Right ventricle myocardium inferior (tissue), 1 donor: ENCODE measurements at regions of chr15 and their contacts with region 1.

Region 1: DNA sequence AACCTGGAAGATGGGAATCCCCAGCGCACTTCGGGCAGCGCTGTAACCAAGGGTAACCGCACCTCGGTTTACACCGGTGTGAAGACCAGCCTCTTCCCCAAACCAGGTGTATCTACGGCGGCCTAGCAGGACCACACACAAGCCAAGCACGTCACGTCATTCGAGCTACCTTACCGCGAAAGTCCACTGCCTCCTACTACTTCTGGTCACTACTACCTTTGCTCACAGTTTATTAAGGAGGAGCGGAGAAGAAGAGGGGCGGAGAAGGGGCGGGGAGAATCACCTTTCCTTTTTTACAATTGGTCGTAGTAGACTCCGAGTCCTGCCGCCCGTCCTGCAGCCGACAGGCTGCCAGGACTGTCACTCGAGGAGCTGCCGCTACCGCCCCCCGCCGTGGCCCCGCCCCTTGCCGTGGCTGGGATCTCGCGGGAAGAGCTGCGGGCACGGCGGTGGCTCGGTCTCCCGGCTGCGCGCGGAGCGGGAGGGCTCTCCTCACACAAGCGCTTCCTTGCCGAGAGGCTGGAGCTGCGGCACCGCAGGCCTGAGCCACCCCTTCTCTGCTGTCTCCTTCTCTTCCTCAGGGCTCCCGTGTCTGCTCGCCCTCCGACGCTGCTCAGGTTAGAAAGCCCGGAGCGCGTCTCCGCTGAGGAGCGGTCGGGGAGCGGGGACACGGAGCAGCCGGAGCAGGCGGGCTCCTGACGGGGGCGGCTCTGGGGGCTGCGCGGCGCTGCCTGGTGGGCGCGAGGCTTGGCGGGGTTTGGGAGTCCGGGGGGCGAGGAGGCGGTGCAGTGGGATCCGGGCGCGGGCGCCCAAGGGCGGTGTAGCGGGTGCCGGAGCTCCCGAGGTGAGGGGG is at the start of gene GLCE:
- DNase-seq: peak; percentile 98
- ATAC-seq: peak; percentile 99
- total RNA-seq, gene GLCE: 8.9 TPM

Region 2: DNA sequence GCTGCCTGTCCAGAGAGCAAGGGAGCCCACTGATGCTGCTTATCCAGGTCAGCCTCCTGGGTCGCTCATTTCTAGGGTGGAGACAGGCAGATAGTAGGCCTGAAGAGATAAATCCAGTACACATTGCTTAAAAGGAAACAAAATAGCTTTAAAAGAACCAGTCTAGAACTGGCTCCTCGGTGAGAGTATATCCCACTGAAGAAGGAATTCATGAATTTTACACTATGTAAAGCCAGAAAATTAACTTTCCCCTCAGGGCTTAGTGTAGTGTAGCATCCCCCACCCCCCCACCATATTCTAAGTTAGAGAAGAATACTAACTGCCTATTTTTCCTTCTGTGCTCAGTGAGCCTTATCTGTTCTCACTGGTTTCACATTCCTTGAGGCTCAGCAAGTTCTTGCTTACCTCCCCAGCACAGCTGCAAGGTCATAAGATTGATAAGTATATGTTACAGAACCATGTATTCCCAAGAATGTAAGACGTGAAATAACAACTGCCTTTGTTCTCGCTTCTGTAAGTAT is 176.3 kb before region 1 on chr15:
- intact Hi-C with region 1: no loop called
- DNase-seq: no peak
- ATAC-seq: no peak

Region 3: GRCh38 chr15:69058830-69059556 is 101.4 kb before region 1 on chr15:
- intact Hi-C with region 1: loop called (anchors 1 kb)
- DNase-seq: peak; percentile 89
- ATAC-seq: peak; percentile 78

Region 4: DNA sequence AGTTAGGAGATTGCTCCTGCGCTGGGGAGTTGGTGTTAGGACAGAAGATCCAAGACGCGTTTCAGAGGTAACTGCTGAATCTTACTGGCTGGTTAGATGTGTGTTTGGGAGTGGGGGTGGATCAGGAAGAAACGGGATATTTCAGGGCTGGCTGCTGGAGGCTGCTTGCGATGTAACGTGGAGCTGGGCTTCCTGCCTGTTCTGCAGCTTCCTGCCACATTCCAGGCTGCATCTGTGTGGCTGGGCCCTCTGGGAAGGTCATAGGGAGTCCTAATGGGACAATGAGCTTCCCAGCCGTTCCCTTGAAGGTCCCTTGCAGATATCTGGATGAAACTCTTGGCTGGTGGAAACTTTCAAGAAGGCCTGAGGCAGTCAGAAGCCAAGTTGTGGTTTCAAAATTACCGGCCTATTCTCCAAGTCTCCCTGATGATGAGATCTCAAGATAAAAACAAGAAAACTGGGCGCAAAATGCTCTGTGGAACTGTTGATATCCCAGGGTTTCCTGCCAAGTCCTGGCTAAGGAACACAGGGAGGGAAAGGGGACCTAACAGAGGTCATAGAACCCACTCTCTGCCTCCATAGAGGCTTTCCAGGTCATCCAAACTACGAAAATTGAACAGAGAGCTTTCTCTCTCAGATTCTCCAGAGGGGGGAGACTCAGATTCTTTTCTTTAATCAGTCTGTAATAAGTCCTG is 78.9 kb before region 1 on chr15:
- intact Hi-C with region 1: loop called (anchors 5 kb)
- DNase-seq: peak; percentile 82
- ATAC-seq: peak; percentile 90

Region 5: DNA sequence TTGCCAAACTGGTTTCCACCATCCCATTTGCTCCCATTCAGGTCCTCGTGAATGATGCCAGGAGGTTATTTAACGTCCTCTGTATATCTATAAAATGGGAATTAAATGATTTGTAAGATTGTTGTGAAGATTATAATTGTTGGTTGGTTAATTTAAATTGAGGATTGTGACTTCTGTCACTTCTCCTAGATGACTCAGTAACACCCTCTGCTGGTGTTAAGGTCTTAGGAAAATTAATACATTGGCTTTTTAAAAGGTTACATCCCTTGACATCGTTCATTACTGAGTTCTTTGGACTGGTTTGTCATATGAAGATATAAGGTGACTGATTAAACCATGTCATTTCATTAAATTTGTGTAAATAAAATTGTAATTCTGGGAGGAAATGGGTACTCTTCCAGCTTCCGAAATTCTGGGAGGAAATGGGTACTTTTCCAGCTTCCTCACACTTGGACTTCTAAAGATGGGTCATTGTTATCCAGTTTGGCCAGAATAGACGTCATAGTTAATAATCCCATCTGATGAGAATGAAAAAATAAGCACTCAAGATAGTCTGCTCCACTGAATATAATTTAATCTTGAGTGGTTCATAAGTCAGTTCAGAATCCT is 105.1 kb after region 1 on chr15:
- intact Hi-C with region 1: loop called (anchors 5 kb)
- DNase-seq: no peak
- ATAC-seq: no peak